Caco-2 (cell line): ENCODE measurements at regions of chr19 and their contacts with region 1.

Region 1: GRCh38 chr19:2475702-2476450 is at the start of gene GADD45B:
- DNase-seq: peak; percentile 98
- H3K4me3 ChIP-seq: peak within 1 kb of the TSS; percentile 79
- H3K4me3 Mint-ChIP-seq: peak within 1 kb of the TSS; percentile 88
- H3K27ac Mint-ChIP-seq: peak within 1 kb of the TSS; percentile 91
- H3K4me1 ChIP-seq: no peaks in the 10 kb centered on the region
- H3K4me1 Mint-ChIP-seq: no peaks in the 10 kb centered on the region
- H3K27me3 ChIP-seq: no peaks in the 10 kb centered on the region
- H3K27me3 Mint-ChIP-seq: no peaks in the 10 kb centered on the region
- CTCF ChIP-seq: no peak
- total RNA-seq, gene GADD45B: 20.2 and 23.8 TPM in 2 replicates

Region 2: DNA sequence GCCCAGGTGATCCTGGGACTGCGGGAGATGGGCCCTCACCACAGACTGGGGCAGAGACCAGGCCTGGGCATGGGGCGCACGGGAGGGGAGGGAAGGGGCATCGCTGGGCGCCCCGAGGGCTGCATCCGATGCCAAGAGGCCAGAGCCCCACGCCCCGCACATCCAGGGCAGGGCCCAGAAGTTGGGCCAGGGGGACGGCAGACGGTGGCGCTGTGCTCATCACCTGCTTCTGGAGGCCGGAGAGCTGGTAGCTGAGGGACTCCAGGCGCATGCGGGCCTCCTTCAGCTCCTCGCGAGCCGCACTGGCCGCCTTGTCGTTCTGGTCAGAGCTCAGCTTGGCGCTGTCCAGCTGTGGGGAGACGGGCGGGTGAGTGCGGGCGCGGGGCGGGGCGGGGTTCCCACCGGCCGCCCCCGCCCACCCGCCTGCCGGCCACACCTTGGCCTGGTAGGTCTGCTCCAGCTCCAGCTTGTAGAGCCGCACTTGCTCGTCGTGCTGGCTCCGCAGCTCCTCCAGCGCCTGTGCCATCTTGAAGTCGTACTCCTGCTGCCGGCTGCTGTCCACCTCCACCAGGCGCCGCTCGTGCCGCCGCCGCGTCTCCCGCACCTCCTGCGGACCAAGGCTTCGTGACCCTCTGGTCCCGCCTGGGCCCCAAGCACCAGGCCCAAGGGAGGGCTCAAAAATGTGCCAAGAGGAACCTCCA is 41.2 kb before region 1 on chr19:
- CTCF ChIA-PET with region 1: no interaction called
- POLR2A ChIA-PET with region 1: no interaction called
- intact Hi-C with region 1: no loop called
- DNase-seq: no peak
- H3K4me3 ChIP-seq: no peak overlapping the region
- H3K4me3 Mint-ChIP-seq: peak overlapping the region; percentile 4
- H3K27ac Mint-ChIP-seq: peak overlapping the region; percentile 53
- H3K4me1 ChIP-seq: no peaks in the 10 kb centered on the region
- H3K4me1 Mint-ChIP-seq: no peaks in the 10 kb centered on the region
- H3K27me3 ChIP-seq: no peaks in the 10 kb centered on the region
- H3K27me3 Mint-ChIP-seq: no peaks in the 10 kb centered on the region
- CTCF ChIP-seq: no peak

Region 3: DNA sequence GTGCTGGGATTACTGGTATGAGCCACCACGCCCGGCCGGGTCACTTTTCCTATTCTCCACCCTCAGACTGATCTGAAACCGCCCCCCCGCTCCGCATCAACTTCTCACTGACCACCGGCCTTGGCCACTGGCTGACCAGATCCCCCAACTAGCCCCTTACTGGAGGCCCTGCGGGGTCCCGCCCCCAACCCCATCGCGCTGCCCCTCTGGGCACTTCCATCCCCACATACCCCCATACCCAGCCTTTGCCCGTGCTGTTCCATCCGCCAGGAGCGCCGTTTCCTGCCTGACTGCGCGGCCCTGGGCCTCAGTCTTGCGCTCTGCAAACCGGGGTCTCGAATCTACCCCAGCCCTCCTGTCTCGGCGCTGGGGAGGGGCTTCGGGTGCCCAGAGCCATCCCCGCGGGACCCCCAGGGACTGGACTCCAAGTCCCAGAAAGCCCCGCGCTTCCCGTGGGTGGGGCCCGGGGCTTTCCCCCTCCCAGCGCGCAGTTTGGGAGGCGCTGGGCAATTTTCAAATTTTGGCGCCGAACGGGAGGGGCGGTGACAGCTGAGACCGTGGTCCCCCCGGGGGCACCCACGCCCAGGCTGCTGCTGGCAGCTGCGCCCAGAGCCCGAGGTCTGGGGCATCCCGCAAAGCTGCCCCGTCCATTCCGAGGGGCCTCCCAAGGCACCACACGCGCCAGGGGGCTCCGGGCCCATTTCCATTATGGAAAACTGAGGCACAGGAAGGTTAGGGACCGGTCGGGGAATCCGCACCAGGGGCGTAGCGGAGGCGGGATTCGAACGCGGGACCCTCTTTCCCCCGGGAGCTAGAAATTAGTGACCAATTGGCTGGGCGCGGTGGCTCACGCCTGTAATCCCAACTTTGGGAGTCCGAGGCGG is 13.9 kb before region 1 on chr19:
- CTCF ChIA-PET with region 1: no interaction called
- POLR2A ChIA-PET with region 1: interaction called, 22 read pairs
- intact Hi-C with region 1: no loop called
- DNase-seq: no peak
- H3K4me3 ChIP-seq: no peak overlapping the region
- H3K4me3 Mint-ChIP-seq: peak overlapping the region; percentile 55
- H3K27ac Mint-ChIP-seq: no peak overlapping the region
- H3K4me1 ChIP-seq: no peaks in the 10 kb centered on the region
- H3K4me1 Mint-ChIP-seq: no peaks in the 10 kb centered on the region
- H3K27me3 ChIP-seq: no peaks in the 10 kb centered on the region
- H3K27me3 Mint-ChIP-seq: no peaks in the 10 kb centered on the region
- CTCF ChIP-seq: no peak

Region 4: DNA sequence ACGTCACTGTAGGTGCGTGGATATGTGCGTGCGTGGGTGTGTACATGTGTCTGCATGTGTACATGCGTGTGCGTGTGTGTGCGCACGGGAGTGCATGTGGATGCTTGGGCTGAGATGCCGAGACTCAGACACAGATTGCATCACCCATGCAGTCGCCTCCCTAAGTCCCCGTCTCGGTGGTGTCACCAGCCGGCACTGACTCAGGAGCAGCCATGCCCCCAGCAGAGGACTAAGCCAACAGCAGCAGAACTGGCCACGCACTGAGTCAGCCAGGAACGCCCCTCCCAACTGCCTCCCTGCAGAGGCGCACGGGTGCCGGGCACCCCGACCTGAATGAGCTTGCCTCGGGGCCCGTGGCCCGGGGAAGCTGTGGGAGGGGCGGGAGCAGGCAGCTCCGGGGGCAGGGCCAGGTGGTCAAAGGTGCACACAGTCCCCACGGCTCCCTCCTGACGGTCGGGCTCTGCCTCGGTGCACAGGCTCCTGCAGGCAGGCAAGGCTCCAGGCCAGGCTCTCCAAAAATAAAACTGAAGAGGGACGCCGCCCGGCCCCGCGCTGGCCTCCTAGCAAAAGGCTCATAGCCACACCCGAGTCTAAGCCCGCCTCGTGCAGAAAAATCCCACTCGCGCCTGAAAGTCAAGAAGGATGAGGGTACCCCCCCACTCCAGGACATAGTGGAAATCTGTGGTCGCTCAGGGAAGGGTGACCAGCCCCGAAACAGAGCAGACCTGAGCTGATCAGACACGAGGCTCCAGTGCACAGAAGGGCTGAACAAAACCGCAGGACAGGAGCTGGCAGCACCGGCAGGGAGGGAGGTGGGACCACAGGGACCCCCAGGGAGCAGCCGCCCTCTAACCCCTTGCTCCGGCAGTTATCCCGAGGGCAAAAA is 49.2 kb after region 1 on chr19:
- CTCF ChIA-PET with region 1: no interaction called
- POLR2A ChIA-PET with region 1: interaction called, 23 read pairs
- intact Hi-C with region 1: loop called (anchors 5 kb)
- DNase-seq: peak; percentile 49 to 73
- H3K4me3 ChIP-seq: peak overlapping the region; percentile 9; the same call in 1 of the 2 replicates
- H3K4me3 Mint-ChIP-seq: peak overlapping the region; percentile 24
- H3K27ac Mint-ChIP-seq: peak overlapping the region; percentile 32
- H3K4me1 ChIP-seq: peaks cover 43% of the 10 kb centered on the region
- H3K4me1 Mint-ChIP-seq: peaks cover 6% of the 10 kb centered on the region
- H3K27me3 ChIP-seq: no peaks in the 10 kb centered on the region
- H3K27me3 Mint-ChIP-seq: no peaks in the 10 kb centered on the region
- CTCF ChIP-seq: no peak

Region 5: GRCh38 chr19:2578901-2579677 is 103.2 kb after region 1 on chr19:
- CTCF ChIA-PET with region 1: interaction called, 24 read pairs
- POLR2A ChIA-PET with region 1: interaction called, 48 read pairs
- intact Hi-C with region 1: loop called (anchors 1 kb)
- DNase-seq: peak; percentile 88 to 89
- H3K4me3 ChIP-seq: peak overlapping the region; percentile 40
- H3K4me3 Mint-ChIP-seq: peak overlapping the region; percentile 70
- H3K27ac Mint-ChIP-seq: peak overlapping the region; percentile 42
- H3K4me1 ChIP-seq: peaks cover 29% of the 10 kb centered on the region
- H3K4me1 Mint-ChIP-seq: no peaks in the 10 kb centered on the region
- H3K27me3 ChIP-seq: no peaks in the 10 kb centered on the region
- H3K27me3 Mint-ChIP-seq: no peaks in the 10 kb centered on the region
- CTCF ChIP-seq: peak; percentile 89 to 94

Region 6: GRCh38 chr19:2610637-2611482 is 135.0 kb after region 1 on chr19:
- CTCF ChIA-PET with region 1: interaction called, 30 read pairs
- POLR2A ChIA-PET with region 1: interaction called, 51 read pairs
- intact Hi-C with region 1: loop called (anchors 1 kb)
- DNase-seq: peak; percentile 87 to 94
- H3K4me3 ChIP-seq: peak overlapping the region; percentile 37
- H3K4me3 Mint-ChIP-seq: peak overlapping the region; percentile 76
- H3K27ac Mint-ChIP-seq: peak overlapping the region; percentile 64
- H3K4me1 ChIP-seq: no peaks in the 10 kb centered on the region
- H3K4me1 Mint-ChIP-seq: no peaks in the 10 kb centered on the region
- H3K27me3 ChIP-seq: no peaks in the 10 kb centered on the region
- H3K27me3 Mint-ChIP-seq: no peaks in the 10 kb centered on the region
- CTCF ChIP-seq: peak; percentile 93 to 95